CD14-positive monocyte (primary cell): ENCODE measurements at regions of chr6 and their contacts with region 1.

Region 1: DNA sequence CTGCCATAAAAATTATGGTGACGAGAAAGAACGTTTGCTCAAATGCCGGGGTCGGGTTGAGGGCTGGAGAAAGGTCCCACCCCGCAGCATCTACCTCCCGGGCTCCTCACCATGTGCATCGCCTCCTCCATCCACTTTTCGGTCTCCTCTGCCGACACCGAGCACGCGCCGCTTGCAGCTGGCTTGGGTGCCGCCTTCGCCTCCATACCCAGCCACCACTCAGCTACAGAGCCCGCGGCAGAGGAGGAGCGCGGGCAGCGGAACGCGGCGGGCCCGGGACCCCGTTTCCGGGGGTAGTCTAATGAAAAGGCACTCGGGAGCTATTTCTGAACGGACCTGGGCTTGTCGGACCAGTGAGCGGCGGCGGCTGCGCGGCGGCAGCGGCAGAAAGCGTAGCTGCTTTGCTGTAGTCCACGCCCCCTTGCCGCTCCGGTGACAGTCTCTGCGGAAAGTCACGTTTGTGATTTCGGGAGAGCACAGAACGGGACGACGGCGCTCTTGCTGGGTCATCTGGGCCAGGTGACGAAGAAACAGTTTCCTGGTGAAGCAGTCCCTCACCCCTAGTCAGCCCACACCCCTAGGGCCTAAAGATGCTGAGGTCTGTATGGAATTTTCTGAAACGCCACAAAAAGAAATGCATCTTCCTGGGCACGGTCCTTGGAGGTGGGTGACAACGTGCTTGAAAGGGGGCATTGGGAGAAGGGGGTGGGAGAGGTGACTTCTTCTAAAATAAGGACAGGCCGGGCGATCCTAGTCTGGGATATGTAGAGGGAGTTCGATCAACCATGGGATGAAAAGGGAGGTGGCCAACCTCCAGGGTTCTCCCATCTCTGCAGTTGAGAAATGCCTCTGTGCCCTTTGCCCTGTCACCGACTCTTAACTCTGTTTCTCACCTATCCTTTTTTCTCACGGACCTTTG is at the starts of genes ADAT2 and PEX3:
- DNase-seq: peak; percentile 90 to 93 (median 91)
- H3K4me3 ChIP-seq: peak within 1 kb of the TSS; percentile 52 to 90 (median 89)
- H3K4me3 Mint-ChIP-seq: peak within 1 kb of the TSS; percentile 97
- H3K27ac ChIP-seq: peak within 1 kb of the TSS; percentile 75 to 85
- H3K27ac Mint-ChIP-seq: peak within 1 kb of the TSS; percentile 88 to 96 (median 93)
- H3K4me1 ChIP-seq: peaks cover 14 to 16% of the 10 kb centered on the region in 2 donors
- H3K4me1 Mint-ChIP-seq: peaks cover 23% of the 10 kb centered on the region
- H3K27me3 ChIP-seq: no peaks in the 10 kb centered on the region
- H3K27me3 Mint-ChIP-seq: peaks cover 0 to 2% (median 0%) of the 10 kb centered on the region in 3 donors
- CTCF ChIP-seq: no peak
- polyA plus RNA-seq, gene ADAT2: 0.08 to 9.7 (median 0.51) TPM
- polyA plus RNA-seq, gene PEX3: 3.2 to 6.9 (median 5.2) TPM

Region 2: GRCh38 chr6:142871910-142872331 is 578.8 kb before region 1 on chr6:
- intact Hi-C with region 1: no loop called
- DNase-seq: peak; percentile 16 to 81 (median 35)
- H3K4me3 ChIP-seq: no peak overlapping the region
- H3K4me3 Mint-ChIP-seq: no peak overlapping the region
- H3K27ac ChIP-seq: no peak overlapping the region
- H3K27ac Mint-ChIP-seq: peak overlapping the region in 2 of 7 donors; percentile 18 to 52
- H3K4me1 ChIP-seq: peaks cover 14 to 32% of the 10 kb centered on the region in 2 donors
- H3K4me1 Mint-ChIP-seq: peaks cover 35% of the 10 kb centered on the region
- H3K27me3 ChIP-seq: no peaks in the 10 kb centered on the region
- H3K27me3 Mint-ChIP-seq: peaks cover 0 to 2% (median 0%) of the 10 kb centered on the region in 3 donors
- CTCF ChIP-seq: no peak

Region 3: GRCh38 chr6:143361536-143362191 is 89.0 kb before region 1 on chr6:
- intact Hi-C with region 1: no loop called
- DNase-seq: no peak
- H3K4me3 ChIP-seq: no peak overlapping the region
- H3K4me3 Mint-ChIP-seq: no peak overlapping the region
- H3K27ac ChIP-seq: no peak overlapping the region
- H3K27ac Mint-ChIP-seq: no peak overlapping the region
- H3K4me1 ChIP-seq: no peaks in the 10 kb centered on the region
- H3K4me1 Mint-ChIP-seq: no peaks in the 10 kb centered on the region
- H3K27me3 ChIP-seq: no peaks in the 10 kb centered on the region
- H3K27me3 Mint-ChIP-seq: peaks cover 0 to 1% (median 0%) of the 10 kb centered on the region in 3 donors
- CTCF ChIP-seq: no peak

Region 4: GRCh38 chr6:143510991-143511891 is 60.5 kb after region 1 on chr6 and contains the start of gene FUCA2:
- intact Hi-C with region 1: loop called in 1 of 2 experiments (anchors 10 kb)
- DNase-seq: peak; percentile 68 to 85 (median 69)
- H3K4me3 ChIP-seq: peak within 1 kb of the TSS; percentile 73 to 90 (median 74)
- H3K4me3 Mint-ChIP-seq: peak within 1 kb of the TSS; percentile 87 to 95
- H3K27ac ChIP-seq: peak within 1 kb of the TSS; percentile 80 to 93
- H3K27ac Mint-ChIP-seq: peak within 1 kb of the TSS; percentile 82 to 91 (median 86)
- H3K4me1 ChIP-seq: peaks cover 21 to 30% of the 10 kb centered on the region in 2 donors
- H3K4me1 Mint-ChIP-seq: peaks cover 39% of the 10 kb centered on the region
- H3K27me3 ChIP-seq: no peaks in the 10 kb centered on the region
- H3K27me3 Mint-ChIP-seq: peaks cover 0 to 2% (median 0%) of the 10 kb centered on the region in 3 donors
- CTCF ChIP-seq: no peak
- polyA plus RNA-seq, gene FUCA2: 35.7 to 93.5 (median 83.7) TPM

Region 5: DNA sequence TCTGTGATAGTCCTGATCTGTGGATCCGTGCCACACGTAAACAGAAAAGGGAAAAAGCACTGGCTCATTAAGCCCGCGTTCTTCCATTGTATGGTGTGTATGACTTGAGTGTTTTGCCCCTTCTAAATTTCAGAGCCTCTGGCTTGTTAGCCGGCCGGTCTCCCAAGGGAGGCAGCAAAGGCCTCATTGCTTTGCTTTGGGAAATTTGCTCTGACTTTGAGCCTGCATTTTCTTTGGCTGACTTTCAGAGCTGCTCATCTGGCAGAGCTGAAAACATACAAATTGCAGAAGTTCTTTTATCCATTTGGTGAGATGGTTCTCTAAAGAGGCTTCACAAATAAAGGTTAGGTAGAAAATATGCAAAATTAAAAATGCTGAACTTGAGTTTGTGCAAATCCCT is 957.4 kb after region 1 on chr6:
- intact Hi-C with region 1: no loop called
- DNase-seq: no peak
- H3K4me3 ChIP-seq: no peak overlapping the region
- H3K4me3 Mint-ChIP-seq: no peak overlapping the region
- H3K27ac ChIP-seq: no peak overlapping the region
- H3K27ac Mint-ChIP-seq: no peak overlapping the region
- H3K4me1 ChIP-seq: no peaks in the 10 kb centered on the region
- H3K4me1 Mint-ChIP-seq: peaks cover 7% of the 10 kb centered on the region
- H3K27me3 ChIP-seq: no peaks in the 10 kb centered on the region
- H3K27me3 Mint-ChIP-seq: no peaks in the 10 kb centered on the region
- CTCF ChIP-seq: no peak